IMR-90 (cell line): ENCODE measurements at regions of chrX and their contacts with region 1.

Region 1: GRCh38 chrX:68822641-68823410 is 6.0 kb upstream of the EFNB1 start:
- DNase-seq: peak; percentile 47
- ATAC-seq: peak; percentile 92
- H3K4me3 ChIP-seq: no peak overlapping the region
- H3K27ac ChIP-seq: no peak overlapping the region
- H3K4me1 ChIP-seq: no peaks in the 10 kb centered on the region
- H3K27me3 ChIP-seq: peaks cover 35% of the 10 kb centered on the region
- CTCF ChIP-seq: peak; percentile 74
- POLR2A ChIP-seq: no peak
- RAD21 ChIP-seq: peak; percentile 81

Region 2: DNA sequence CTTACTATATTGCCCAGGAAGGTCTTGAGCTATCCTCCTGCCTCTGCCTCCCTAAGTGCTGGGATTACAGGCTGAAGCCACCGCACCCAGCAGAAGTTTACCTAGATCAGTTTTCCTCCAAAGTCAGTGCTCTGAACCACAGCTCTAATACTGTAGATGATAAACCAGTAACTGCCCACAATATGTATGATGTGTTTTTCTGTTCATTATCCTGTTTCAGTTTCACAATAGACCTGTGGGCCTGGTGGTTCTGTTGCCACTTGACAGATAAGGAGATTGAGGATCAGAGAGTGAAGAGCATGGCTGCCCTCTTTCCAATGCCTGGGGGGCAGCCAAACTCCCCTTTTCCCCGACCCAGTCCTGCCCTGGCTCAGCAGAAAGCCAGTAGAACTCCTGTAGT is 93.0 kb after region 1 on chrX:
- CTCF ChIA-PET with region 1: no interaction called
- POLR2A ChIA-PET with region 1: no interaction called
- dilution Hi-C with region 1: no loop called
- in situ Hi-C with region 1: no loop called
- intact Hi-C with region 1: no loop called
- DNase-seq: no peak
- ATAC-seq: no peak
- H3K4me3 ChIP-seq: no peak overlapping the region
- H3K27ac ChIP-seq: no peak overlapping the region
- H3K4me1 ChIP-seq: peaks cover 2% of the 10 kb centered on the region; the same call in 1 of the 2 replicates
- H3K27me3 ChIP-seq: peaks cover 23% of the 10 kb centered on the region
- CTCF ChIP-seq: no peak
- POLR2A ChIP-seq: no peak
- RAD21 ChIP-seq: no peak

Region 3: DNA sequence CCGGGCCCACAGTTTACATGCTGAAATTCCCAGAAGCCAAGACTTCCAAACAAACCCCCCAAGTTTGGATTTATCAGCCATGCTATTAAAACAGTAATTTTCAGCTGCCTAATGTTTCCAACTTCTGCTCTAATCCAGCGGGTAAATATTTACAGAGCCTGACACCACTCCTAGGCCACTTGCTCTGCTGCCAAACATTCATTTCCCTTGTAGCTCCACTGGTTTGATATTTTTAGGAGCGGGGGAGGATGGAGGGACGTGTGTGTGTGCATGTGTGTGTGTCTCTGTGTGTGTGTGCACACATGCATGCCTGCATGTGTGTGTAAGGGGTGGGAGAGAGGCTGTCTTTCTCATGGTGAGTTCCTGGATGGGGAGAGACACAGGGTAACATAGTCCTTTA is 458.1 kb after region 1 on chrX:
- CTCF ChIA-PET with region 1: interaction called, 3 read pairs
- POLR2A ChIA-PET with region 1: no interaction called
- dilution Hi-C with region 1: no loop called
- in situ Hi-C with region 1: loop called (anchors 5 kb)
- intact Hi-C with region 1: loop called (anchors 1 kb)
- DNase-seq: no peak
- ATAC-seq: peak; percentile 43; the same call in 1 of the 2 replicates
- H3K4me3 ChIP-seq: no peak overlapping the region
- H3K27ac ChIP-seq: no peak overlapping the region
- H3K4me1 ChIP-seq: peaks cover 3% of the 10 kb centered on the region; the same call in 1 of the 2 replicates
- H3K27me3 ChIP-seq: peaks cover 47% of the 10 kb centered on the region
- CTCF ChIP-seq: no peak
- POLR2A ChIP-seq: no peak
- RAD21 ChIP-seq: no peak

Region 4: GRCh38 chrX:69615779-69616456 is 793.1 kb after region 1 on chrX and contains the start of gene EDA:
- CTCF ChIA-PET with region 1: no interaction called
- POLR2A ChIA-PET with region 1: no interaction called
- dilution Hi-C with region 1: no loop called
- in situ Hi-C with region 1: no loop called
- intact Hi-C with region 1: loop called (anchors 5 kb)
- DNase-seq: peak; percentile 34
- ATAC-seq: peak; percentile 95
- H3K4me3 ChIP-seq: peak within 1 kb of the TSS; percentile 33
- H3K27ac ChIP-seq: no peak within 1 kb of the TSS
- H3K4me1 ChIP-seq: no peaks in the 10 kb centered on the region
- H3K27me3 ChIP-seq: peaks cover 17% of the 10 kb centered on the region
- CTCF ChIP-seq: no peak
- POLR2A ChIP-seq: no peak
- RAD21 ChIP-seq: no peak
- total RNA-seq, gene EDA: under 0.01 TPM in 2 replicates

Region 5: GRCh38 chrX:70030301-70030767 is 1207.5 kb after region 1 on chrX:
- CTCF ChIA-PET with region 1: no interaction called
- POLR2A ChIA-PET with region 1: no interaction called
- dilution Hi-C with region 1: no loop called
- in situ Hi-C with region 1: no loop called
- intact Hi-C with region 1: loop called (anchors 5 kb)
- DNase-seq: peak; percentile 49
- ATAC-seq: peak; percentile 78
- H3K4me3 ChIP-seq: no peak overlapping the region
- H3K27ac ChIP-seq: no peak overlapping the region
- H3K4me1 ChIP-seq: no peaks in the 10 kb centered on the region
- H3K27me3 ChIP-seq: peaks cover 15% of the 10 kb centered on the region
- CTCF ChIP-seq: peak; percentile 59
- POLR2A ChIP-seq: no peak
- RAD21 ChIP-seq: peak; percentile 53